ENCODE measurements at regions of chr12 and their contacts with region 1.

Region 1: DNA sequence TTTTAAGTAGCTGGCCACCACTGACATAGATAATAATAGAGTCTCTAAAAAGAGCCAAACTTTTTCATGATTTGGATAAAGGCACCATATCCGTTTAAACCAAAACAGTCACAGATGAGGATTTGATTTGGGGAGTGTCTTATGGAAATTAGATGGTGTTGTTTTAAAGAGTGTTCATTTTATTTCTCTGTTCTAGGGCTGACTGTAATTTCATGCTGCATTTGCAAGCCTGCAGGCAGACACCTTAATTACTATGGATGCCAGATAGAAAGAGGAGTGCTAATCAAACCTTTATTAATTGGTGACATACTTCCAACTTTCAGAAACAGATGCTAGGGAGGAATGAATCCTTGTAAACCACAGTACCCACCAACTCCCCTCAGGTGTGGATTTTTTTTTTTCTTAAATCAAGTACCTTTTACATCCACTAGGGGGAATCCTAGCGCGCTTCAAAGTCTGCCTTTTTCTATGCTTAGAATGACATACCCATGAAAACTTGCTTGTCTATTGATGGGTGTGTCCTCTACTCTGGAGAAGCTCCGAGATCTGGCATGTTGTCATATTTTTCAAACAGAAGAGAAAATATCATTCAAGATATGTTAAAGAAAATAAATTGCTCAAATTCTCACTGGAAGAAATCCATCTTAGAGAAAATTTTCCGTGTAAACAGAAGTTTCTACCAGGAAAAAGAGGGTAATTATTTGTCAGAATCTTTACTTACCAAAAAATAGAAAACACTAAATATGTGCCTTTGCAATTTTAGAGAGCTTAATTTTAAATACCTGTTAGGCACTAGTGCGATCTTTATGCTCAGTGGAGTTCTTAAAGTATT is 14.2 kb upstream of the PLXNC1 start:
- DNase-seq: no peak
- H3K4me3 ChIP-seq: no peak overlapping the region
- H3K27ac ChIP-seq: no peak overlapping the region
- H3K27me3 ChIP-seq: peaks cover 3% of the 10 kb centered on the region
- CTCF ChIP-seq: peak; percentile 73

Region 2: DNA sequence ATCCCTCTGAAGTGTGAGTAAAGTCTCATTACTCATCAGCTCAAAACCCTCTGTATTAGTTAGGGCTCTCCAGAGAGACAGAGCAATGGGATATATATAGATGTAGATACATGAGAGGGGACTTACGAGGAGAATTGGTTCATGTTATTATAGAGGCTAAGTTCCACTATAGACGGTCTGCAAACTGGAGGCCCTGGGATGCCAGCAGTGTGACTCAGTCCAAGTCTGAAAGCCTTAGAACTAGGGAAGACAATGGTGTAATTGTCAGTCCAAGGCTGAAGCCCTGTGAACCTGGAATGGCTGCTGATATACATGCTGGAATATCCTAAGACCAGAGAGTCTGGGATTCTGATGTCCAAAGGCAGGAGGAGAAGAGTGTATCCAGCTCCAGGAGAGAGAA is 382.8 kb after region 1 on chr12:
- in situ Hi-C with region 1: loop called (anchors 25 kb)
- DNase-seq: peak; percentile 54
- H3K4me3 ChIP-seq: no peak overlapping the region
- H3K27ac ChIP-seq: no peak overlapping the region
- H3K27me3 ChIP-seq: no peaks in the 10 kb centered on the region
- CTCF ChIP-seq: no peak